ENCODE measurements at regions of chr12 and their contacts with region 1.

Region 1: GRCh38 chr12:56724972-56725722 is at the start of gene NACA:
- DNase-seq: peak; percentile 95 to 99 (median 96)
- ATAC-seq: peak; percentile 93
- H3K4me3 ChIP-seq: peak within 1 kb of the TSS; percentile 89
- H3K27ac ChIP-seq: peak within 1 kb of the TSS; percentile 97
- H3K4me1 ChIP-seq: peaks cover 14 to 29% of the 10 kb centered on the region in 2 experiments
- H3K27me3 ChIP-seq: no peaks in the 10 kb centered on the region
- CTCF ChIP-seq: no peak
- EP300 ChIP-seq: peak; percentile 3; the same call in 1 of the 2 replicates
- POLR2A ChIP-seq: peak; percentile 99
- RAD21 ChIP-seq: peak in 1 of 2 experiments; percentile 21; a peak in 2 of 4 replicates
- polyA plus RNA-seq, gene NACA: 2,280 to 2,416 TPM

Region 2: GRCh38 chr12:56645717-56646446 is 79.3 kb before region 1 on chr12 and contains the start of gene ATP5F1B:
- CTCF ChIA-PET with region 1: no interaction called
- POLR2A ChIA-PET with region 1: interaction called, 8 read pairs
- in situ Hi-C with region 1: loop called (anchors 10 kb)
- intact Hi-C with region 1: no loop called
- DNase-seq: peak; percentile 90 to 99 (median 96)
- ATAC-seq: peak; percentile 98
- H3K4me3 ChIP-seq: peak within 1 kb of the TSS; percentile 81
- H3K27ac ChIP-seq: peak within 1 kb of the TSS; percentile 96
- H3K4me1 ChIP-seq: peaks cover 4 to 19% of the 10 kb centered on the region in 2 experiments
- H3K27me3 ChIP-seq: no peaks in the 10 kb centered on the region
- CTCF ChIP-seq: no peak; a peak in 1 of 6 replicates
- EP300 ChIP-seq: peak; percentile 14; the same call in 1 of the 2 replicates
- POLR2A ChIP-seq: peak; percentile 99
- RAD21 ChIP-seq: no peak
- polyA plus RNA-seq, gene ATP5F1B: 1,043 to 1,482 TPM

Region 3: DNA sequence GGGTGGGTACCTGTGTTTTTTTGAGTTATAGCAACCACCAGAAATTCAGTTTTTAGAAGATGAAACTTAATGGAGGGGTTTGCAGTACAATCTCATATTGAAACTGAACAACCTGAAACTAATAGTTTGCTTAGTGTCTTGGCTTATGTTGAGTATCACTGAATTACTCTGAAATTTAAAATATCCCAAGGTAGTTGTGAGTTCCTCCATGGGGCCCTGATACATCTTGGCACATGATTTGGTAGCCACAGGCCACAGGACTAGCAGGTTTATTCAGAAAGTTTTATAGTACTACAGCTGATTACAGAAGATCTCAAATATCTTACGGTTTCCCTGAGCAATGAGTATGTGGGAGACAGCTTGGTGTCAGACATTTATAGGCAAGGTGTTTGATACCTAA is 47.5 kb before region 1 on chr12:
- CTCF ChIA-PET with region 1: no interaction called
- POLR2A ChIA-PET with region 1: interaction called, 10 read pairs
- in situ Hi-C with region 1: no loop called
- intact Hi-C with region 1: no loop called
- DNase-seq: no peak
- ATAC-seq: no peak
- H3K4me3 ChIP-seq: no peak overlapping the region
- H3K27ac ChIP-seq: peak overlapping the region; percentile 3; the same call in 1 of the 3 replicates
- H3K4me1 ChIP-seq: peaks cover 21 to 63% of the 10 kb centered on the region in 2 experiments; a peak in 4 of 5 replicates
- H3K27me3 ChIP-seq: no peaks in the 10 kb centered on the region
- CTCF ChIP-seq: no peak
- EP300 ChIP-seq: no peak
- POLR2A ChIP-seq: no peak
- RAD21 ChIP-seq: no peak

Region 4: DNA sequence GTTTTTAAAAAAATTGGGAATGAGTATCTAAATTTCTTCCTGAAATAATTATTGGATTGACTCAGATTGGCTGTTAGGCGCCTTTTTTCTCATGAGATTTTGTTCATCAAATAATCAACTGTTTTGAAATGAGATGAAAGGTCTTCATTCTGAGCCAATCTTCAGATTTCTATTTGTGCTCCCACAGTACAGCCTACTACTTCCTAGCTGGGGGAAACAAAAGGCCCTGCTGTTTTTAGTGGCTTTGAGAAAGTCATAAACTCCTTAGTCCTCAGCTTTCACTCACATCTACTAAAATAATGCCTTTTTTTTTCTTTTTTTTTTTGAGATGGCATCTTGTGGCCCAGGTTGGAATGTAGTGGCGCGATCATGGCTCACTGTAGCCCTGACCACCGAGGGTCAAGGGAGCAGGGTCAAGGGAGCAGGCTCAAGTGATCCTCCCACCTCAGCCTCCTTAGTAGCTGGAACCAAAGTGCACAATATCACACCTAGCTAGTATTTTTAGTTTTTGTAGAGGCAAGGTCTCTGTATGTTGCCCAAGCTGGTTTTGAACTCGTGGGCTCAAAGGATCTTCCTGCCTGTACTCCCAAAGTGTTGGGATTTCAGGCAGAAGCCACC is 15.3 kb before region 1 on chr12:
- CTCF ChIA-PET with region 1: no interaction called
- POLR2A ChIA-PET with region 1: interaction called, 32 read pairs
- in situ Hi-C with region 1: no loop called
- intact Hi-C with region 1: no loop called
- DNase-seq: no peak
- ATAC-seq: peak; percentile 39
- H3K4me3 ChIP-seq: no peak overlapping the region
- H3K27ac ChIP-seq: peak overlapping the region; percentile 34; the same call in 1 of the 3 replicates
- H3K4me1 ChIP-seq: no peaks in the 10 kb centered on the region; a peak in 1 of 5 replicates
- H3K27me3 ChIP-seq: no peaks in the 10 kb centered on the region
- CTCF ChIP-seq: no peak
- EP300 ChIP-seq: no peak
- POLR2A ChIP-seq: no peak
- RAD21 ChIP-seq: no peak

Region 5: GRCh38 chr12:56751712-56752598 is 26.8 kb after region 1 on chr12 and contains the start of gene PRIM1:
- CTCF ChIA-PET with region 1: no interaction called
- POLR2A ChIA-PET with region 1: interaction called, 16 read pairs
- in situ Hi-C with region 1: no loop called
- intact Hi-C with region 1: no loop called
- DNase-seq: peak; percentile 90 to 96 (median 93)
- ATAC-seq: peak; percentile 90
- H3K4me3 ChIP-seq: peak within 1 kb of the TSS; percentile 72
- H3K27ac ChIP-seq: peak within 1 kb of the TSS; percentile 97
- H3K4me1 ChIP-seq: peaks cover 11 to 16% of the 10 kb centered on the region in 2 experiments; a peak in 4 of 5 replicates
- H3K27me3 ChIP-seq: no peaks in the 10 kb centered on the region
- CTCF ChIP-seq: no peak
- EP300 ChIP-seq: no peak
- POLR2A ChIP-seq: peak; percentile 94
- RAD21 ChIP-seq: no peak
- polyA plus RNA-seq, gene PRIM1: 175 to 179 TPM

Measured in K562 (cell line).